ENCODE measurements at regions of chr17 and their contacts with region 1.

Region 1: GRCh38 chr17:43393944-43394482 is 4.8 kb upstream of the ARL4D start:
- DNase-seq: peak; percentile 83
- ATAC-seq: peak; percentile 60
- H3K4me3 ChIP-seq: no peak overlapping the region
- H3K27ac ChIP-seq: peak overlapping the region; percentile 55
- H3K4me1 ChIP-seq: peaks cover 64% of the 10 kb centered on the region
- H3K27me3 ChIP-seq: no peaks in the 10 kb centered on the region
- CTCF ChIP-seq: peak; percentile 96
- EP300 ChIP-seq: 0 out of 4 replicates have a peak, but pooled peaks of 1 of the 2 experiments have one; percentile 11
- POLR2A ChIP-seq: no peak
- RAD21 ChIP-seq: peak; percentile 99

Region 2: GRCh38 chr17:43418441-43419374 is 24.7 kb after region 1 on chr17:
- CTCF ChIA-PET with region 1: no interaction called
- POLR2A ChIA-PET with region 1: interaction called, 29 read pairs
- in situ Hi-C with region 1: no loop called
- intact Hi-C with region 1: no loop called
- DNase-seq: peak; percentile 56
- ATAC-seq: peak; percentile 97
- H3K4me3 ChIP-seq: peak overlapping the region; percentile 32 to 65 (median 32); a peak in 5 of 6 replicates
- H3K27ac ChIP-seq: peak overlapping the region; percentile 4
- H3K4me1 ChIP-seq: peaks cover 34% of the 10 kb centered on the region
- H3K27me3 ChIP-seq: peaks cover 7 to 46% of the 10 kb centered on the region in 2 experiments; a peak in 4 of 5 replicates
- CTCF ChIP-seq: peak; percentile 57
- EP300 ChIP-seq: no peak
- POLR2A ChIP-seq: no peak
- RAD21 ChIP-seq: peak; percentile 32; the same call in 1 of the 2 replicates

Region 3: GRCh38 chr17:43431714-43432523 is 37.9 kb after region 1 on chr17:
- CTCF ChIA-PET with region 1: interaction called, 11 read pairs
- POLR2A ChIA-PET with region 1: interaction called, 13 read pairs
- in situ Hi-C with region 1: no loop called
- intact Hi-C with region 1: no loop called
- DNase-seq: no peak
- ATAC-seq: no peak
- H3K4me3 ChIP-seq: no peak overlapping the region
- H3K27ac ChIP-seq: no peak overlapping the region
- H3K4me1 ChIP-seq: peaks cover 87% of the 10 kb centered on the region
- H3K27me3 ChIP-seq: no peaks in the 10 kb centered on the region
- CTCF ChIP-seq: no peak
- EP300 ChIP-seq: no peak
- POLR2A ChIP-seq: no peak
- RAD21 ChIP-seq: no peak

Region 4: DNA sequence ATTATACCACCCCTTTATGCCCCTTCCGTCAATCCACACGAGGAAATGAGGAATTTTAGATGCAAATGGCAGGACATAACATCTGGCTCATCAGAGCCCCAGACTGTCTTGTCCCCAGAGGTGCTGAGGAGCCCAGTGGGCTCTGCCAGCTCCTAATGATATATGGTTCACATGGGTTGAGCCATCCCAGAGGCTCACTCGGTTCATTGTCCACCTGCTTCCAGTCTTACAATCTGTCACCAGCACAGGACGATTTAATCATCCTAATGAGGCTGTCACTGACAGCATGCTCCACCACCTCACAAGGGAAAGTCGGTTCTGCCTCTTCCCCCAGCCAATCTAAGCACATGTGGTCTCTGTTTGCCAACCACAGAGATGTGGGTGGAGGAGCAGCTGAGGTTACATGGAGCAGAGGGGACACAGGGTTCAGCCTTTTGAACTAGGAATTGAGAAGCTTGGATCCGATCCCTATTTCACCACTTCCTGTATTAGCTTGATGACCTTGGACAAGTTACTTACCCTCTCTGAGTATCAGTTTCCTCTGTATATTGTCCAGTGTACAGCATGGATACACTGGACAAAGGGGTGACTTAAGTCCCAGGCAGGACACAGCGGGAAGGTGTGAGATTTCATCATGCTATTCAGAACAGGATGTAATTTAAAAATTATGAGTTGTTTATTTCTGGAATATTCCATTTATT is 62.8 kb after region 1 on chr17:
- CTCF ChIA-PET with region 1: no interaction called
- POLR2A ChIA-PET with region 1: interaction called, 54 read pairs
- in situ Hi-C with region 1: no loop called
- intact Hi-C with region 1: no loop called
- DNase-seq: peak; percentile 100
- ATAC-seq: peak; percentile 95
- H3K4me3 ChIP-seq: peak overlapping the region in 1 of 3 experiments; percentile 17; a peak in 1 of 6 replicates
- H3K27ac ChIP-seq: peak overlapping the region; percentile 83
- H3K4me1 ChIP-seq: peaks cover 79% of the 10 kb centered on the region
- H3K27me3 ChIP-seq: no peaks in the 10 kb centered on the region
- CTCF ChIP-seq: peak; percentile 37
- EP300 ChIP-seq: peak; percentile 79 to 99; a peak in 3 of 4 replicates
- POLR2A ChIP-seq: peak; percentile 60 to 68
- RAD21 ChIP-seq: peak; percentile 57; the same call in 1 of the 2 replicates

Region 5: DNA sequence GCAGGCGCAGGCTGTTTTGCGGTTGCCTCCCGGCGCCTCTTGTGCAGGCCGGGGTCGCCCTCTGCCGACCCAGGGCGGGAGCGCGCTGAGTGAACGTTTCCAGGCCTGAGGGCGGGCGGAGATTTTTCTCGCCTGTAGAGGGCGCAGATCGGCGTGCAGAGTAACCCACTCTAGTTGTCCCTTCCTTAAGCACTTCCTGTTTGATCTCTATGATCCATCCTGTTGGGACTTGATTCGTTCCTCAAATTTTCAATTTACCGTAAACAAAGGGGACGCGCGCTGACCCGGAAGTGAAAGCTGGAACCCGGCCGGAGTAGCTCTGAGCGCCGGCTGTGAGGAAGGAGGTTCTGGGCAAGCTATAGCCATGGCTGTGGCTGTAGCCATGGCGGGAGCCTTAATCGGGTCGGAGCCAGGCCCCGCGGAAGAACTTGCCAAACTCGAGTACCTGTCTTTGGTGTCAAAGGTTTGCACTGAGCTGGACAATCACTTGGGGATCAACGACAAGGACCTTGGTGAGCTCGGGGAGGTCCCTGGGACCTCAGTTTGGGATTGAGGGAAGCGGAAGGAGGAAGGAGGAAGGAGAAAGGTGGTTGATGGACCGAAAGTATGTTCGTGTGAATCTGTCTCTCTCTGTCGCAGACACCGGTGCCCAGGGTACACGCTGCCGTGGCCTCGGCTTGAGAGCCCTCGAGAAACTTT is 89.8 kb after region 1 on chr17 and contains the start of gene DHX8:
- CTCF ChIA-PET with region 1: interaction called, 381 read pairs
- POLR2A ChIA-PET with region 1: interaction called, 485 read pairs
- in situ Hi-C with region 1: loop called (anchors 5 kb)
- intact Hi-C with region 1: loop called (anchors 1 kb)
- DNase-seq: peak; percentile 100
- ATAC-seq: peak; percentile 94
- H3K4me3 ChIP-seq: peak within 1 kb of the TSS; percentile 76 to 85 (median 78)
- H3K27ac ChIP-seq: peak within 1 kb of the TSS; percentile 73
- H3K4me1 ChIP-seq: peaks cover 75% of the 10 kb centered on the region
- H3K27me3 ChIP-seq: no peaks in the 10 kb centered on the region; a peak in 1 of 5 replicates
- CTCF ChIP-seq: peak; percentile 100
- EP300 ChIP-seq: peak; percentile 51 to 66
- POLR2A ChIP-seq: peak; percentile 83 to 92
- RAD21 ChIP-seq: peak; percentile 100
- total RNA-seq, gene DHX8: 48.9 and 66.9 TPM in 2 replicates

Region 6: GRCh38 chr17:43983515-43984411 is 589.8 kb after region 1 on chr17:
- CTCF ChIA-PET with region 1: no interaction called
- POLR2A ChIA-PET with region 1: no interaction called
- in situ Hi-C with region 1: no loop called
- intact Hi-C with region 1: no loop called
- DNase-seq: peak; percentile 67
- ATAC-seq: peak; percentile 93
- H3K4me3 ChIP-seq: peak overlapping the region; percentile 41 to 72 (median 51)
- H3K27ac ChIP-seq: no peak overlapping the region
- H3K4me1 ChIP-seq: peaks cover 23% of the 10 kb centered on the region
- H3K27me3 ChIP-seq: peaks cover 6 to 79% of the 10 kb centered on the region in 2 experiments
- CTCF ChIP-seq: peak; percentile 60
- EP300 ChIP-seq: peak in 1 of 2 experiments; percentile 77; a peak in 2 of 4 replicates
- POLR2A ChIP-seq: no peak
- RAD21 ChIP-seq: peak; percentile 10; the same call in 1 of the 2 replicates

Measured in HepG2 (cell line).